ENCODE measurements at regions of chr6 and their contacts with region 1.

Region 1: GRCh38 chr6:118724211-118724610 is 72.8 kb upstream of the CEP85L start:
- DNase-seq: no peak
- H3K4me3 Mint-ChIP-seq: peak overlapping the region; percentile 4
- H3K27ac Mint-ChIP-seq: peak overlapping the region; percentile 75
- H3K4me1 Mint-ChIP-seq: peaks cover 54% of the 10 kb centered on the region
- H3K27me3 Mint-ChIP-seq: no peaks in the 10 kb centered on the region

Region 2: GRCh38 chr6:118444796-118445195 is 279.4 kb before region 1 on chr6:
- intact Hi-C with region 1: no loop called
- DNase-seq: no peak
- H3K4me3 Mint-ChIP-seq: no peak overlapping the region
- H3K27ac Mint-ChIP-seq: no peak overlapping the region
- H3K4me1 Mint-ChIP-seq: no peaks in the 10 kb centered on the region
- H3K27me3 Mint-ChIP-seq: no peaks in the 10 kb centered on the region

Region 3: DNA sequence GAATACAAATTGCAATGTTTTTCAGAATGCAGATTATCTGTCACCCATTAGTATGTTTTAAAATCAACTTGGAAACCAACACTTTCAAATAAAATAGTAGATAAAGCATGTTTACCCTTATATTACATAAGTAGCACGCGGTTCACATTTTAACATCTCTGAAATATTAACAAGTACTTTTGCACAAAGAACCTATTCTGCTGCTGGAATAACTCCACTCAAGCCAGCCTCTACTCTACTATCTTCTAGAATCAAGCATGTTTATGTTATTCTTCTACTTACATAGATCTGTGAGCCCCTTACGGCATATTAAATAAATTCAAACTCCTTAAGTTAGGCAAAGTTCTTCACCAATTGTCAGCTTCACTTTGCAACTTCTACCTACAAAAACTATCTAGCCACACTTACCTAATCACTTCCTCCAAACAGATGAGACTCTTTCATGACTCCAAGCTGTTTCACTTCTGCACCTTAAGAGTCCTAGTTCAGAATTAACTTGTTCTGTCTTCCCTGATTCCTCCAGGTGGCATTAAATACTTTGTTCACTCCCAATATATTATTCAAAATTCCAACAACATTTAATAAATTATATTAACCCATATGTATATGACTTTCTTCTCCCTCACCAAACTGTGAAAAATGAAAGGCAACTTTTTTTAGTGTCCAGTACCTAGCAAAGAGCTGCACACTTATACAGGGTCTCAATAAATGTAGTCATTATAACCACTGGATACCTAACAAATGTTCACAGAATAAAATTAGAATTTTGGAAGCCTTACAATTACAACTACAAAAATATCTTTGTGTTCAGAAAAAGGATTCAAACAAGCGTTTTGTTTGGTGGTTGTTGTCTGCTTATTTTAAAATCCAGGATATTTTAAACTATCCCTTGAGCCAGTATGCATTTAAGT is 84.9 kb before region 1 on chr6:
- intact Hi-C with region 1: no loop called
- DNase-seq: no peak
- H3K4me3 Mint-ChIP-seq: no peak overlapping the region
- H3K27ac Mint-ChIP-seq: no peak overlapping the region
- H3K4me1 Mint-ChIP-seq: peaks cover 38% of the 10 kb centered on the region
- H3K27me3 Mint-ChIP-seq: no peaks in the 10 kb centered on the region

Region 4: GRCh38 chr6:118651282-118652050 is 72.7 kb before region 1 on chr6 and contains the start of gene CEP85L:
- intact Hi-C with region 1: loop called (anchors 1 kb)
- DNase-seq: peak; percentile 85
- H3K4me3 Mint-ChIP-seq: peak within 1 kb of the TSS; percentile 84
- H3K27ac Mint-ChIP-seq: peak within 1 kb of the TSS; percentile 89
- H3K4me1 Mint-ChIP-seq: peaks cover 36% of the 10 kb centered on the region
- H3K27me3 Mint-ChIP-seq: no peaks in the 10 kb centered on the region
- total RNA-seq, gene CEP85L: 34.2 and 36.7 TPM in 2 replicates

Region 5: DNA sequence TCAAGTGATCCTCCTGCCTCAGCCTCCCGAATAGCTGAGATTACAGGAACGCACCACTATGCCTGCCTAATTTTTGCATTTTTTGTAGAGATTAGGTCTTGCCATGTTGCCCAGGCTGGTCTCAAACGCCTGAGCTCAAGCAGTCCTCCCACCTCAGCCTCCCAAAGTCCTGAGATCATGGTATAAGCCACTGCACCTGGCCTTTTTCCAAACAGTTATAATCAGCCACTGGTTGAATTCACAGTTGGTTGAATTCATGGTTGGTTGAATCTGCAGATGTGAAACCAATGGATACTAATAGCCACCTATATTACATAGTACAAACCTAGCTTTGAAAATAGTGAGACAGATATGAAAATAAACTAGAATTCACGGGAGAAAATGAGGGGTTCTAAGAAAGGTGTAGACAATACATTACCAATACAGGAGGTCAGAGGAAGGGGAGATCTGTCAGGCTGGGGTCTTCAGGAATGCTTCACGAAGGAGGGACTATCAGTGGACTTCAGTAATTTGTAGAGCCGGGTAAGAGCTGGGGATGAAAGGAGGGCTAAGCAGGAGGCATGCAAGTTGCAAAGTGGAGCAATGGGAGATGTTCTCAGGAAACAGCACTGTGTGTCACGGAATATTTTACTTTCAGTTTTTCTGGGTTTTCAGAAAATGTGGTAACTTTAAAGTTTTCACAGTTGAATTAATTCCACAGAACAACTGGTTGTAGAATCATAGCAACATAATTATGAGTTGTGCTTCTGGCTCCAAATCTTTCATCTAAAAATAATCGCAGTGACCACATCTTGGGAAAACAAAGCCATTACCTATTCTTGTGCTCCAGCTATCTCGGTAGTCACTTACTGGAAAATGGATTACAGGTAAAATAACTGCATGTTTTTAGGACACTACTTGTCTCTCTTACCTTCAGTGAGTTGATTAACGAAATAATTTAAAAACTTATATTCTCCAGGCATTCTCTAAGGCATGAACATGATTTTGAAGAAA is 59.9 kb before region 1 on chr6:
- intact Hi-C with region 1: loop called (anchors 1 kb)
- DNase-seq: no peak
- H3K4me3 Mint-ChIP-seq: peak overlapping the region; percentile 86
- H3K27ac Mint-ChIP-seq: peak overlapping the region; percentile 96
- H3K4me1 Mint-ChIP-seq: peaks cover 58% of the 10 kb centered on the region
- H3K27me3 Mint-ChIP-seq: no peaks in the 10 kb centered on the region

Region 6: GRCh38 chr6:118680452-118681095 is 43.6 kb before region 1 on chr6:
- intact Hi-C with region 1: loop called (anchors 1 kb)
- DNase-seq: no peak
- H3K4me3 Mint-ChIP-seq: peak overlapping the region; percentile 35
- H3K27ac Mint-ChIP-seq: peak overlapping the region; percentile 81
- H3K4me1 Mint-ChIP-seq: peaks cover 54% of the 10 kb centered on the region
- H3K27me3 Mint-ChIP-seq: no peaks in the 10 kb centered on the region

Region 7: DNA sequence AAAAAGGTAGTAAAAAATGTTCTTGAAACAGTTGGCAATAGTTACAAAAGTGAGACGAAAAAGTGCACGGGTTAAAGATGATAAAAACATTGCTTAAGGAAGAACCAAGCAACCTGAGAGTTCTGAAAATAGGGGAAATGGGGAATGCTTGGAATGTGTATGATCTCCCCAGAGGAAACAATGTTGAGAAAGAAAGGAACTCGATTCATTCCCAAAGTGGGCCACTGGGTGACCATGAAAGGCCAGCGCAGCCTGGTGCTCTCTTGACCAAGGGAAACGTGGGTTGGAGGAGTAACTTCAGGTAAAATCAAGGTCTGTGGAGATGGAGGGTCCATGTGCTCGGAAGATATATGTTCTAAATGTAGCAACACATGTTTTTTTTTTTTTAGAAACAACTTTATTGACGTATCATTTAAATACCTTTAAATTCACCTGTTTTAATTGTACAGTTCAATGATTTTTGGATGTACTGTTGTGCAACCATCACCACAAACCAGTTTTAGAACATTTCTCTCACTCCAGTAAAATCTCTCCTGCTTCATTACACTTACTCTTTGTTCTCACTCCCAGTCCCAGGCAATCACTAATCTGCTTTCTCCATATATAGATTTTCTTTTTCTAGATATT is 38.3 kb before region 1 on chr6:
- intact Hi-C with region 1: loop called (anchors 1 kb)
- DNase-seq: no peak
- H3K4me3 Mint-ChIP-seq: no peak overlapping the region
- H3K27ac Mint-ChIP-seq: peak overlapping the region; percentile 47
- H3K4me1 Mint-ChIP-seq: peaks cover 49% of the 10 kb centered on the region
- H3K27me3 Mint-ChIP-seq: no peaks in the 10 kb centered on the region

Region 8: DNA sequence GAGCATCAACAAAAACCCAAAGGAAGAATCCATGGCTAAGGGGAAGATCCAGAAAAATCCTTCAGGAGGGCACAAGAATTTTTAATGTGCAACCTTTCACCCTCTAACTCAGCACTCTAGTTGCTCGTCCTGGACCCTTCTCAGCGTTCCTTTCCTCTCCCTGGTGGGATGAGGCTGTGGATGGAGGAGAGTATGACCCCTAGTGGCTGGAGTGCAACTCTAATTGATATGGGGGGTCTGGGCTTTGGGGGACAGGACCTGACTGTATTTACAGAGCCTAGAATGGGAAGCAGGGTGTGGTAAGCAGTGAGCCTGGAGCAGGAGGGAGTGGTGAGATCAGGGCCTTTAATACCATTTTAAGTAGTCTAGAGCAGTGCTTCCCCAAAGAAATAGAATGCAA is 11.1 kb after region 1 on chr6:
- intact Hi-C with region 1: loop called (anchors 1 kb)
- DNase-seq: no peak
- H3K4me3 Mint-ChIP-seq: no peak overlapping the region
- H3K27ac Mint-ChIP-seq: no peak overlapping the region
- H3K4me1 Mint-ChIP-seq: peaks cover 18% of the 10 kb centered on the region
- H3K27me3 Mint-ChIP-seq: no peaks in the 10 kb centered on the region

Region 9: DNA sequence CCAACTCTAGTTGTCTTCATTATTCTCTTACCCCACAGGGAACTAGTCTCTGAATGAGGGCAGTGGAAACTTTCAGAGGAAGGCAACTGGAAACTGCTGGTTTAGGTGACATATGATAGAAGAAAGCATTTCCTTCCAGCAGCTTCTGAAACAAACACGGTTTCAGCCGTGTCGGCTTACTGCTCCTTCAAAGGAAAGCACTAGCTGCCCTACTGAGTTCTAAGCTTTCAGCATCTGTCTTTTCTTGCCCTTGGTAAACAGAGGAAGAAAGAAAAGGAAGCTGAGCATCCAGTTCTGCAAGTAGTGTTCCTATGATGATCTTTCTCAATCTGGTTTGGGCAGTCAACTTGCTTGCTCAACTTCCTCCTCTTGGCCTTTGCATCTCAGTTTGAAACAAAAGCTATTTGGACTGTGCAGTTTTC is 44.7 kb after region 1 on chr6:
- intact Hi-C with region 1: loop called (anchors 1 kb)
- DNase-seq: peak; percentile 14
- H3K4me3 Mint-ChIP-seq: no peak overlapping the region
- H3K27ac Mint-ChIP-seq: peak overlapping the region; percentile 65
- H3K4me1 Mint-ChIP-seq: peaks cover 23% of the 10 kb centered on the region
- H3K27me3 Mint-ChIP-seq: no peaks in the 10 kb centered on the region

Measured in activated T-helper 2 cell treated with anti-CD3 and anti-CD28 coated beads, Interferon-gamma antibody, Interleukin-2, Interleukin-4, amounts not matched to agents 10 μg/mL and 5 μg/mL and 100 μg/mL, durations not matched to agents 14 hours and 24 hours and 36 hours (primary cell).